Mammary epithelial cell (primary cell): ENCODE measurements at regions of chr2 and their contacts with region 1.

Region 1: GRCh38 chr2:13413989-13414388 is 697.3 kb downstream of the TRIB2 start:
- DNase-seq: no peak
- H3K4me3 ChIP-seq: no peak overlapping the region
- H3K27ac ChIP-seq: no peak overlapping the region
- H3K4me1 ChIP-seq: no peaks in the 10 kb centered on the region
- H3K27me3 ChIP-seq: no peaks in the 10 kb centered on the region
- CTCF ChIP-seq: peak in 1 of 2 donors; percentile 12

Region 2: GRCh38 chr2:13056259-13056843 is 357.6 kb before region 1 on chr2:
- CTCF ChIA-PET with region 1: no interaction called
- dilution Hi-C with region 1: no loop called
- in situ Hi-C with region 1: no loop called
- intact Hi-C with region 1: loop called (anchors 5 kb)
- DNase-seq: no peak
- H3K4me3 ChIP-seq: no peak overlapping the region
- H3K27ac ChIP-seq: no peak overlapping the region
- H3K4me1 ChIP-seq: peaks cover 3% of the 10 kb centered on the region
- H3K27me3 ChIP-seq: peaks cover 1% of the 10 kb centered on the region
- CTCF ChIP-seq: peak; percentile 49 to 65